CD4-positive, alpha-beta T cell (primary cell): ENCODE measurements at regions of chr2 and their contacts with region 1.

Region 1: DNA sequence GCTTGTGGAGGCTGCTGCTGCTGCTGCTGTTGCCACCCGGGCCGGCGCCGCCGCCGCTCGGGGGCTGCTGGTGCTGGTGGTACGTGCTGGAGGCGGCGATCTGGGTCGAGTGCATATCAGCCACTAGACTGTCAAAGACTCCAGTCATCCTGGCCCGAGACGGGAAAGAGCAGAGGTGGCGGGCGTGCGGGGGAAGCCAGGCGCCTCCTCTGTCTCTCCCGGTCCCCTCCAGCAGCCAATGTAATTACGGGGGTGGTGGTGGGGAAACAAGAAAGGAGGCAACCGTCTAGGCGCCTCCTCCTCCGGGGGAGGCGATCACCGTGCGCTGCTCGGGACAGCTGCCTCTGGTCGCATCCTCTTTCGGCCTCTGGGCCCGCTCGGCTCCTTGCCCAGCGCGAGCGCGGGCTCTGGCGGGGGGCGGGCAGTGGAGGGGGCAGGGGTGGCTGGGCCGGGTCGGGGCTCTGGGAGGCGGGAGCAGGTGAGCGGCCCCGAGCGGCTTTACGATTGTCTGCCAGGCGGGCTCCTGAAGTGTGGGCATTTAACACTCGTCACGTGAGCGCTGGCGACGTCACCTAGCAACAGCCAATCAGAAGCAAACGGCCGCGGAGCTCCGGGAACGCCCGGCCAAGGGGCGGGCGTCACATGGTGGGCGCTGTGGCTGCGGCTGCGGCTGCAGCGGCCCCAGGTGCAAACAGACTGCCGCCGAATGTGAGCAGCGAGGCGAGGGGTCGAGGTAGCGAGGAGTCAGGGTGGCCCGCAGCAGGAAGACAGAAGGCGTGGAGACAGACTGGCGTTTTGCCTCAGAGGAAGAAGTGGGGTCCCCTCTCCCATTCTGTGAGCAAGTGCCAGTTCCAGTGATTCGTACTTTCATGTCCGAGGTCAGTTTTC is at the start of gene DLX2:
- DNase-seq: peak in 8 of 14 experiments; percentile 38 to 84 (median 60)
- ATAC-seq: peak; percentile 12
- H3K4me3 ChIP-seq: peak within 1 kb of the TSS; percentile 55
- H3K4me3 Mint-ChIP-seq: peak within 1 kb of the TSS; percentile 84
- H3K27ac ChIP-seq: no peak within 1 kb of the TSS
- H3K27ac Mint-ChIP-seq: peak within 1 kb of the TSS; percentile 66
- H3K4me1 ChIP-seq: peaks cover 82% of the 10 kb centered on the region
- H3K4me1 Mint-ChIP-seq: peaks cover 50% of the 10 kb centered on the region
- H3K27me3 ChIP-seq: peaks cover 95 to 98% of the 10 kb centered on the region in 2 experiments
- H3K27me3 Mint-ChIP-seq: peaks cover 80% of the 10 kb centered on the region
- CTCF ChIP-seq: no peak
- total RNA-seq, gene DLX2: not detected

Region 2: DNA sequence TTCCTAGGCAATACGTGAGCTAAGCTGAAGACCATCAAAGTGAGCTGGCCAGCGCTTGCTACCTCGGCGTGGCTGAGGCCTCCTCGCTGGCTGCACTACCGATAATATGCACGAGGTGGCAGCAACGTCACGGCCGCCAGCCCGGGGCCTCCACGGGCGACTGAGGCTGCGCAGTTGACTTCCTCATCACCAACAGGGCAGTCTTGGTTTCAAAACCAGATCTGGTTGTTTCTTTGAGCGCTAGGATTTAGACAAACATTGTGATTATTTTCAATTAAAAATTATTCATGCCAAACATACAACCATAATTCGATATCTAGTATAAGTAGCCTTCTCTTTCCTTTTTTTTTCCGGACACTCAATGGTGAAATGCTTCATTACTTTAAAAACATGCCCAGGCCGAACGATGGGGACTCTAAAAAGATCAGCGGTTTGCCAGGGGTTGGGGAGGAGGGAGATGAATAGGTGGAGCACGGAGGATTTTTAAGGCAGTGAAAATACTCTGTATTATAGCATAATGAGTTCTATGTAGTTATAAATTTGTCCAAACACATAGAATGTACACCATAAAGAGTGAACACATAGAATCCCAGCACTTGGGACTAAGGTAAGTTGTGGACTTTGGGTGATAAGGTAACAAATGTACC is 528.4 kb before region 1 on chr2:
- CTCF ChIA-PET with region 1: no interaction called
- POLR2A ChIA-PET with region 1: no interaction called
- intact Hi-C with region 1: loop called (anchors 5 to 10 kb)
- DNase-seq: peak; percentile 67 to 88 (median 76)
- ATAC-seq: peak; percentile 99
- H3K4me3 ChIP-seq: no peak overlapping the region
- H3K4me3 Mint-ChIP-seq: no peak overlapping the region
- H3K27ac ChIP-seq: no peak overlapping the region
- H3K27ac Mint-ChIP-seq: peak overlapping the region; percentile 54
- H3K4me1 ChIP-seq: peaks cover 6% of the 10 kb centered on the region
- H3K4me1 Mint-ChIP-seq: peaks cover 6% of the 10 kb centered on the region
- H3K27me3 ChIP-seq: no peaks in the 10 kb centered on the region
- H3K27me3 Mint-ChIP-seq: no peaks in the 10 kb centered on the region
- CTCF ChIP-seq: peak; percentile 92

Region 3: DNA sequence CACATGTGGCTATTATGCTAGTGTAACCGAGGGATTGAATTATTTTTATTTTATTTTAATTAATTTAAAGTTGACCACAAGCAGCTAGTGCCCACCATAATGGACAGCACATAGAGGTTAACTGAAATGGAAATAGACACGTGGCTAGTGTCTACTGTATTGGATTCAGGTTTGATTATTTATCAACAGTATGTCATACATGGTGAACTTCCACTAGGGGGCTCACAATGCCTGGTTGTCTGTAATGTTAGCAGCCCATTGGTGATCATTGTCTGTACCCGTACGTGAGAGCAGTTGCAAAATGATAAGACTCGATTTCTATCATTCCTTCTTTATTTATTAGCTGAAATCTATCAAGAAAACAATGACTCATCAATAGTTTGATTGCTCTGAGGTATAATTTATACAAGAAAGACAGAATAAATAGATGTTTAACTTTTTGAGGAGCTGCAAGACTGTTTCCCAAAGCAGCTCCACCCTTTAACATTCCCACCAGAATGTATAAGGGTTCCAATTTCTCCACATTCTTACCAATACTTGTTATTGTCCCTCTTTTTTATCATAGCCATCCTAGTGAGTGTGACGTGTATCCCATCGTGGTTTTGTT is 503.8 kb before region 1 on chr2:
- CTCF ChIA-PET with region 1: no interaction called
- POLR2A ChIA-PET with region 1: no interaction called
- intact Hi-C with region 1: loop called in 1 of 2 experiments (anchors 5 kb)
- DNase-seq: peak in 12 of 14 experiments; percentile 1 to 75 (median 28)
- ATAC-seq: peak; percentile 92
- H3K4me3 ChIP-seq: no peak overlapping the region
- H3K4me3 Mint-ChIP-seq: no peak overlapping the region
- H3K27ac ChIP-seq: no peak overlapping the region
- H3K27ac Mint-ChIP-seq: no peak overlapping the region
- H3K4me1 ChIP-seq: no peaks in the 10 kb centered on the region
- H3K4me1 Mint-ChIP-seq: peaks cover 6% of the 10 kb centered on the region
- H3K27me3 ChIP-seq: no peaks in the 10 kb centered on the region
- H3K27me3 Mint-ChIP-seq: no peaks in the 10 kb centered on the region
- CTCF ChIP-seq: peak; percentile 92

Region 4: DNA sequence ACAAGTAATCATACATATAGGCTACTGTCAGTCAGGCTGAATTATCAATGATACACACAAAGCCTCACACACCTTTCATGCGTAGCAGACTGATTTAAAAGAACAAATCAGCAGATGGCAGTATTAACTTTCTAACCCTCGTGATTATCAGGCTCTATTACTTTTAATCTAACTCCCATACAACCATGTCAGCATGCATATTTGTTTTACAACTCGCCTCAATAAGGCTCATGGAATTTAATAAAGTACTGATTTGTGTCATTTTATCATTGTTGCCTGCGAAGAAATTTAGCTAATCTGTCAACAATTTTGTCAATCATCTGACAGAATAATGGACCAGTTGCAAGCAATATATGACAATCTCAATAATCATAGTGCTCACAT is 291.4 kb before region 1 on chr2:
- CTCF ChIA-PET with region 1: interaction called, 3 read pairs
- POLR2A ChIA-PET with region 1: interaction called, 3 read pairs
- intact Hi-C with region 1: loop called in 1 of 2 experiments (anchors 2 kb)
- DNase-seq: peak in 3 of 14 experiments; percentile 23 to 31 (median 24)
- ATAC-seq: no peak
- H3K4me3 ChIP-seq: no peak overlapping the region
- H3K4me3 Mint-ChIP-seq: no peak overlapping the region
- H3K27ac ChIP-seq: no peak overlapping the region
- H3K27ac Mint-ChIP-seq: no peak overlapping the region
- H3K4me1 ChIP-seq: no peaks in the 10 kb centered on the region
- H3K4me1 Mint-ChIP-seq: no peaks in the 10 kb centered on the region
- H3K27me3 ChIP-seq: no peaks in the 10 kb centered on the region
- H3K27me3 Mint-ChIP-seq: no peaks in the 10 kb centered on the region
- CTCF ChIP-seq: peak; percentile 37

Region 5: GRCh38 chr2:172086241-172087206 is 16.1 kb before region 1 on chr2:
- CTCF ChIA-PET with region 1: interaction called, 5 read pairs
- POLR2A ChIA-PET with region 1: interaction called, 23 read pairs
- intact Hi-C with region 1: loop called (anchors 2 kb)
- DNase-seq: peak in 11 of 14 experiments; percentile 49 to 83 (median 59)
- ATAC-seq: peak; percentile 76
- H3K4me3 ChIP-seq: peak overlapping the region; percentile 10
- H3K4me3 Mint-ChIP-seq: peak overlapping the region; percentile 77
- H3K27ac ChIP-seq: no peak overlapping the region
- H3K27ac Mint-ChIP-seq: peak overlapping the region; percentile 78
- H3K4me1 ChIP-seq: peaks cover 76% of the 10 kb centered on the region
- H3K4me1 Mint-ChIP-seq: peaks cover 73% of the 10 kb centered on the region
- H3K27me3 ChIP-seq: peaks cover 97 to 99% of the 10 kb centered on the region in 2 experiments
- H3K27me3 Mint-ChIP-seq: peaks cover 100% of the 10 kb centered on the region
- CTCF ChIP-seq: peak; percentile 36

Region 6: GRCh38 chr2:172434821-172435605 is 332.4 kb after region 1 on chr2:
- CTCF ChIA-PET with region 1: no interaction called
- POLR2A ChIA-PET with region 1: no interaction called
- intact Hi-C with region 1: no loop called
- DNase-seq: peak in 10 of 14 experiments; percentile 26 to 88 (median 49)
- ATAC-seq: peak; percentile 82
- H3K4me3 ChIP-seq: no peak overlapping the region
- H3K4me3 Mint-ChIP-seq: peak overlapping the region; percentile 74
- H3K27ac ChIP-seq: peak overlapping the region; percentile 1 to 30
- H3K27ac Mint-ChIP-seq: no peak overlapping the region
- H3K4me1 ChIP-seq: peaks cover 92% of the 10 kb centered on the region
- H3K4me1 Mint-ChIP-seq: peaks cover 16% of the 10 kb centered on the region
- H3K27me3 ChIP-seq: no peaks in the 10 kb centered on the region
- H3K27me3 Mint-ChIP-seq: no peaks in the 10 kb centered on the region
- CTCF ChIP-seq: no peak